HCT116 (cell line): ENCODE measurements at regions of chr17 and their contacts with region 1.

Region 1: DNA sequence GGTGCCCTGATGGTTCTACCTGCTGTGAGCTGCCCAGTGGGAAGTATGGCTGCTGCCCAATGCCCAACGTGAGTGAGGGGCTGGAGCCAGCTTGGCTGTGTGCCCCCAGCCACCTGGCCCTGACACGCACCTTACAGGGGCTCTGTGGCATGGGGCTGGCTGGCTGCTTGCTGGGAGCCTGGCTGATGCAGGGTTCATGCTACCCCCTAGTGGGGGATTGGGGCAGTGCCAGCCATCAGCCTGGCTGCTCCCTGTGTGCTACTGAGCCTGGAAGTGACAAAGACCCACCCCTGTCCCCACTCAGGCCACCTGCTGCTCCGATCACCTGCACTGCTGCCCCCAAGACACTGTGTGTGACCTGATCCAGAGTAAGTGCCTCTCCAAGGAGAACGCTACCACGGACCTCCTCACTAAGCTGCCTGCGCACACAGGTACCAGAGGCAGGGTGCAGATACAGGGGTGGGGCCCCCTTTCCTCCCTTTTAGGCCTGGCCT is 5.7 kb downstream of the GRN start:
- DNase-seq: no peak
- ATAC-seq: peak; percentile 91
- H3K4me3 ChIP-seq: no peak overlapping the region
- H3K27ac ChIP-seq: no peak overlapping the region
- H3K4me1 ChIP-seq: peaks cover 4 to 7% of the 10 kb centered on the region in 2 experiments; a peak in 2 of 4 replicates
- H3K27me3 ChIP-seq: no peaks in the 10 kb centered on the region
- CTCF ChIP-seq: peak; percentile 75 to 91 (median 84)
- POLR2A ChIP-seq: no peak
- RAD21 ChIP-seq: peak; percentile 87

Region 2: DNA sequence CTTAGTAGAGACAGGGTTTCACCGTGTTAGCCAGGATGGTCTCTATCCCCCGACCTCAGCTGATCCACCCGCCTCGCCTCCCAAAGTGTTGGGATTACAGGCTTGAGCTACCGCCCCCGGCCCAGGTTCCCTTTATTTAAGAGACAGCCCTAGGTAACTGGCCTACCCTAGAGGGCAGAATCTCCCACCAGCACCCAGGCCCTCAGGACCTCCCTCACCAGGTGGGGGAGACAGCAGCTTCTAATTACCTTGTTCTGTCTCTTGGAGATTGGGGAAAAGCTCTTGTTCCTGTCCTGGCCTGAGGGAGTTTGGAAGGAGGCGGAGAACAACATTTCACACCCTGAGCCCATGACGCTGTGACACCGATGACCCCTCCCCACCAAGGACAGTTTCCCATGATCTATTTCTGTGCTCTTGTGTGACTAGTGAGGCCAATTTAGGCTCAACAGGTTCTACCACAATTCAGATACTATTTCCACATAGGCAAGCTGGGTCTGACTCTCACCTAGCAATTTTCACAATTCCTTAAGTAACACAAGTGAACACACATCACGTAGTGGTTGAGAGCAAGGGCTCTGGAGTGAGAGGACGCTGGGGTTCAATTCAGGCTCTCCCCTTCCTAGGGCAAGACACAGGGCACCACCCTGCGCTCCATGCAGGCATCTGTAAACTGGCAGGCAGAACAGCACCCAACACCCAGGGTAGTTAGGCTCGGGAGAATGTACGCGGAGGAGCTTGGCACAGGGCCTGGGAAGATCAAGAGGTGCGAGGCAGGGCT is 247.7 kb before region 1 on chr17:
- CTCF ChIA-PET with region 1: no interaction called
- POLR2A ChIA-PET with region 1: no interaction called
- RAD21 ChIA-PET with region 1: no interaction called
- intact Hi-C with region 1: no loop called
- DNase-seq: no peak
- ATAC-seq: no peak
- H3K4me3 ChIP-seq: no peak overlapping the region
- H3K27ac ChIP-seq: no peak overlapping the region
- H3K4me1 ChIP-seq: peaks cover 4 to 15% of the 10 kb centered on the region in 2 experiments
- H3K27me3 ChIP-seq: no peaks in the 10 kb centered on the region
- CTCF ChIP-seq: no peak
- POLR2A ChIP-seq: no peak
- RAD21 ChIP-seq: no peak

Region 3: DNA sequence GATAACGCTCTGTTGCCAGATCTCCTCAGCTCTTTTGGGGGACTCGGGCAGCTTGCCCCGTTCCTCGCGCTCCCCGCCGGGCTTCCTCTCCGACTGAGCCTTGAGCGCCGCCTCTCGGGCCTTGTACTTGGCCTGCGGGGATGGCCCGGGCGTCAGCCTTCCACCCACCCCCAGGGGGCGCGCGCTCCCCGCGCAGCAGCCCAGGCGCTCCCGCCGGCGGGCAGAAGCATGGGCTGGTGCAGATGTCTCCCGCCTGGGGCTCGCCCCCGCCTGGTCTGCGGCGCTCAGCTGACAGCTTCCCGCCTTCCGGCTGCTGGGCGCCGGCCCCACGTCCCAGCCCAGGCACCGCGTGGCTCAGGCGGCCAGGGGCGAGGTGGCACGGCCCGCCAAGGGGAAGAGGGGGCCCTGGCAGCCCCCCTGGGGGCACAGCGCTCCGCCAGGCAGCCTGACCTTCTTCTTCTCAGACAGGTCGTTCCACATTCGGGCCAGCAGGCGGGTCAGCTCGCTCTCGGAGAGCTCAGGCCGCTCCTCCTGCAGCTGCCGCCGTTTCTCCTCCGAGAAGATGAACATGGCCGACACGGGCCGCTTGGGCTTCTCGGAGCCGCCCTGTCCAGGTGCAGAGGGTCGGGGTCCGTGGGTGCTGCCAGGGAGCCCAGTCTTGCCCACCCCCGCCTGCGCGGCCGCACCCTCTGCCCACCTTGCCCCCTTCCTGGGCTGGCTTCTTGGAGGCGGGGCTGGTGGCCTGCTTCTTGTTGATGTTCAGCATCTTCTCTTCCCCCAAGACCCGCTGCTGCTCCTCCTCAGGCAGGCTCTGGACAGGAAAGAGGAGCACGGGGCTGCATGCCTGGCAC is 140.2 kb before region 1 on chr17:
- CTCF ChIA-PET with region 1: interaction called, 19 read pairs
- POLR2A ChIA-PET with region 1: interaction called, 5 read pairs
- RAD21 ChIA-PET with region 1: interaction called in 1 of 2 experiments, 3 read pairs
- intact Hi-C with region 1: no loop called
- DNase-seq: peak; percentile 63
- ATAC-seq: peak; percentile 88
- H3K4me3 ChIP-seq: 0 out of 4 replicates have a peak overlapping the region, but pooled peaks of 1 of the 2 experiments have one; percentile 2
- H3K27ac ChIP-seq: peak overlapping the region; percentile 42
- H3K4me1 ChIP-seq: peaks cover 19 to 49% of the 10 kb centered on the region in 2 experiments
- H3K27me3 ChIP-seq: no peaks in the 10 kb centered on the region
- CTCF ChIP-seq: peak; percentile 90 to 99 (median 99)
- POLR2A ChIP-seq: no peak
- RAD21 ChIP-seq: peak; percentile 99

Region 4: DNA sequence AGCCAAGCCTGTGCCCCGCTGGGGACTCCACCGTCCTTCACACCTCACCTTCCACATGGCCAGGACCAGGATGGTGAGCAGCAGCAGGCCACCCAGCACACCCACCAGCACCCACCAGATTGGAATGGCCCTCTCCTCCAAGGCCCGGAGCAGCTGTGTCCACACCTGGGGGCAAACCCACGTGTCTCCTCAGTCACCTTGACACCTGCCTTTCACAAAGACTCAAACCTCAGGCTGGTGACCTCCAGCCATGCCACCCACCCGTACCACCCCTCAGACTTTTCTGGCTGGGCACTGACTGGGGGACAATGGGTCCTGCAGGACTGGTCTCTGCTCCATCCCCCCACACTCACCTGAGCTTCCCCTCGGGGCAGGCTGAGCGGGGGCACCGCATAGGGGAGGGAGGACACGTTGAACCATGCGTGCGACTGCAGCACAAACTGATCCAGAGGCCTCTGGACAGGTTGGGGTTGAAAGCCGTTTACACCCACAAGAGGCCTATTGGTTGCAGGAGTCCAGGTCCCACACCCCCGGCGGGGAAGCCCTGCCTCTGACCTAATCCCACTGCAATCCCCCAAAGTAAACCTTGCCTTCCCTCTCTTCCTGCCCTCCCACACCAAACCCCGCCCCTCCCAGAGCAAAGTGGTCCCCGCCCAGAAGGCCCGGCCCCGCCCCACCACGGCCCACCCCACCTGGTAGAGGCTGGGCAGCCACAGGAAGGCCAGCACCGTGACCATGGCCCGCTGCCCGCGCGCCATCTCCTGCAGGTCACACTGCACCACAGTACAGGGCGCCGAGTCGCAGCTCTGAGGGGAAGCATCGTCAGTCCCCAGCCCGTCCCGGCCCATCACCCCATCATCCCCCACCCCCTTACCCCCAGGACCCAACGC is 23.8 kb after region 1 on chr17:
- CTCF ChIA-PET with region 1: no interaction called
- POLR2A ChIA-PET with region 1: no interaction called
- RAD21 ChIA-PET with region 1: no interaction called
- intact Hi-C with region 1: no loop called
- DNase-seq: no peak
- ATAC-seq: peak; percentile 21; the same call in 1 of the 2 replicates
- H3K4me3 ChIP-seq: no peak overlapping the region
- H3K27ac ChIP-seq: no peak overlapping the region
- H3K4me1 ChIP-seq: peaks cover 0 to 13% of the 10 kb centered on the region in 2 experiments; a peak in 3 of 4 replicates
- H3K27me3 ChIP-seq: no peaks in the 10 kb centered on the region
- CTCF ChIP-seq: no peak
- POLR2A ChIP-seq: no peak
- RAD21 ChIP-seq: no peak

Region 5: DNA sequence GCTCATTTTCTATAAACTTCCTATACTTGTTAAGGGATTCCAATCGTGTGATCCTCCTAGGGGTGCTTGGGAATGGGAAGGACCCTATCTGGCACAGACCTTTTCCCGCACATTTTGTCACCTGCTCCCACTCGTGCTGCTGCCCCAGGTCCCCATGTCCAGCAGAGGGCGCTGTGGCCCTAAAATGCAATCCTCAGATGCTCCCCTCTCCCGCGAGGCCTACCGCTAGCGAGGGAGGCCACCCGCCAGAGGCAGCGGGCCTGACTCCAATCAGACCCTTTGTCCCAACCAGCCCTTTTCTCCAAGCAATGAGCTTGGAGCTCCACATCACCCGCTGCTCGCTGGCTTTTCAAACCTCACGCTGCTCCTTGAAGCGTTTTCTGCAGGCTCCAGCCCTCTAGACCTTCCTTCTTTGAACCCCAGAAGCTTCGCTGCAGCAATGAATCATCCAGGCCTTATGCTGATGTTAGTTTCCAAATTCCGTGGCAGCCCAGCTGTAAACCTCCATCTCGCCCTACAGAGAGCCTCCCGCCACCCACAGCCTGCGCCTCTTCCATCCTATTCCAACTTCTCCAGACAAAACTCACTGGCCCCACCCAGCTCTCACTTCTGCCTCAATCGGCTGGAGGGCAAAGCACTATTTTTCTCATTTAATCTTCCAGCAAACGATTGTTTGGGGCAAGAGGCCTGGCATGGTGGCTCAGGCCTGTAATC is 182.9 kb after region 1 on chr17:
- CTCF ChIA-PET with region 1: no interaction called
- POLR2A ChIA-PET with region 1: no interaction called
- RAD21 ChIA-PET with region 1: no interaction called
- intact Hi-C with region 1: no loop called
- DNase-seq: peak; percentile 77
- ATAC-seq: peak; percentile 94
- H3K4me3 ChIP-seq: no peak overlapping the region
- H3K27ac ChIP-seq: peak overlapping the region; percentile 15; the same call in 1 of the 2 replicates
- H3K4me1 ChIP-seq: peaks cover 6 to 32% of the 10 kb centered on the region in 2 experiments; a peak in 3 of 4 replicates
- H3K27me3 ChIP-seq: no peaks in the 10 kb centered on the region
- CTCF ChIP-seq: peak; percentile 91 to 99 (median 94)
- POLR2A ChIP-seq: no peak
- RAD21 ChIP-seq: peak; percentile 98